Left cardiac atrium (tissue), 4 donors: ENCODE measurements at regions of chr19 and their contacts with region 1.

Region 1: DNA sequence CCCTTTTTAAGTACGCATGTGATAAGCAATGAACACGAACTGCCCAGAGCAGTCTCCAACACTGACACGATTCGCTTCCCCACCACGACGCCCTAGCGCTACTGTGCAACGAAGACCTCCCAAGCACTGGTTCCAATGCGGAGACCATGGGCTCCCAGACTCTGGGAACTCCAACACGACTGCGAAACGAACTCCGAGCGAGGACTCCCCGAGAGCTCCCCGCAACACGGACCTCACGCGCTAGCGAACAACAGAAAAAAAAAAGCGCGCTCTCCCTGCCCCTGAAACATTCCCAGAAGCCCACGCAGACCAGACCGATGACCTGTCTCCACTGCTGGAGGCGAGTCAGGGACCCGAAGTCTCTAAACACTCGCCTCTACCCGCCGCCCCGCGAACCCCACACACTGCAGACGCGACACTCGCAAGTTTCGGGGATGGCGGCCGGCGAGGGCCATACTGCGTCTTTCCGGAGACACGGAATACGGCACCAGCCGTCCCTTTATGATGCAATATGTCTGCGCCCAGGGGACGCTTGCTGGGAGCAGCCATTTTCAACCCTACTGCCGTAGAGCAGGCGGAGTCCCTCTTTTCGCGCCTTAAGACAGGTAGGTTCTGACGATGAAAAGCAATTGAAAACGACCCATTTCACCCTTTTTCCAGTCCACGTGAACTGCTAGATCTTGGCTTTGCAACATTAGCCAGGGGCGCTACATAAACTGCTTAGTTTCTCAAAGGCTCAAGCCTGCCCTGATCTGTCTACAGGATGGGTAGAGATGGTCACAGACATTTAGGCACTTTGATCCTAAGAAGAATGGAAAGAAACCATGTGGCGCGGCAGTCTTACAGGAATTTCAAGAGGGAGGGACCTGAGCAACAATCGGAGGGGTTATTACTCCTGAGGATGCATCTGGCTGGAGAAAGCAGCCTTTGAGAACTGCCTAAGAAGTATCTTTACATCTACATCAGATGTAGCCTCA is at the start of gene ZNF577:
- DNase-seq: peak; percentile 93
- ATAC-seq: peak; percentile 98 to 99
- total RNA-seq, gene ZNF577: 7.3 to 9.3 TPM

Region 2: DNA sequence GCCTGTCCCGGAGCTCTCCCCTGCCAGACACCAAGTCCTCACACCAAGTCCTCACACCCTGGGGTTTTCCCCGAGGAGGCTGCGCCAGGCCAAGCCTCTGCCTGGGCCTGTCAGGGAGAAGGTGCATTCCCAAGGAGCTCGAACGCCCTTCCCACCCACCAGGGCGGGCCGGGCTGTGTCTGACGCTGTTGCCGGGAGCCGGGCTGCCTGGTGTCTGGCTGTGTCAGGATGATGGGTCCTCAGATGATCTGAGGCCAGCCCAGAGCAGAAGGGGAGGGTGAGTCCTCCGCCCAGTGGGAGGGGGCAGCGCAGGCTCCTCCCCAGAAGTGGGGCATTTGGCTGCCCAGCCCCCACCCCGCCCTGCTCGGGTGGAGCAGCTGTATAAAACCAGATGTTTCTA is 161.8 kb before region 1 on chr19:
- intact Hi-C with region 1: no loop called
- DNase-seq: peak; percentile 75
- ATAC-seq: peak; percentile 69 to 82

Region 3: DNA sequence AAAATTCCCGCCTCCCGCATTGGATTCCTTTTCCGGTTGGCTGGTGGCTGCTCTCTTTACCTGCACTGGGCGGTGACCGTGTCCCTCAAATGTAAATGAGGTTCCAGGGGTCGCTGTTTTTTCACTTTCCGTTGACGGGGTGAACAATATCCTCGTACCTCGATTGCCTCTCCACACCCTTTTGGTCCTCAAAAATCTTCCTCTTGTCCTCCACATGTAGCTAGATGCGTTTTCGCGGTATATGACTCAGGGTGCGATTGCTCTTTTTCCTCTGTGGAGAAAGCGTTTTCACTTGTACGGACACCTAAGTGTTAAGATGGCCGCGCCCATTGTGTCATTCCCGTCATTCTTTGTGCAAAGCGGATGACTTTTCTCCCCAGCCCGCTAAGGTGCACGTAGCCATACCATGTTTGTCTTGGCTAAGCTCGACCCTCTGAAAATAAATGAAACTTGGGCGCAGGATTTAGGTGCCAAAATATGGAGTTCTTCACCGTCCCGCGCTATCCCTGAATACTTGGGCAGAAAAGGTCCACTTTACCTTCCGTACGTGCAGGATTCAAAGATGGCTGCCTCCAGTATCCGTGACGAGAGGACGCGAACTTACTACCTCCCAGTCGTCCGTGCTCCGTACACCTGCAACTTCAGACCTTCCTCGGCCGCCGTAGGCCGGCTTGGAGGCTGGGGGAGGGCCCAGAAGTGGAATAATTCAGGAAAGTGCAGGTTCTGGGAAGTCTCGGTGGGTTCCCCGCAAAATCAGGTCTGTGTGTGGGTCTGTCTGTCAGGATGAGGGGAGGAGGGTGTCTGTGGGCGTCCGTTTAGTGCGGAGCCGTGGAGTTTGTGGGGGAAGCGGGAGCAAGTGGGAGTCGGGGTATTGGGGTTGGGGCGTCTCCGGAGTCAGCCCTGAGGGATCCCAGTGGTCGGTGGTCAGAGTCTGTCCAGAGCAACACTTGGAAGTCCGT is 39.3 kb after region 1 on chr19 and contains the start of gene ZNF613:
- intact Hi-C with region 1: loop called in 1 of 2 experiments (anchors 2 kb)
- DNase-seq: peak; percentile 90
- ATAC-seq: peak; percentile 98 to 99
- total RNA-seq, gene ZNF613: 4.3 to 5.5 TPM

Region 4: DNA sequence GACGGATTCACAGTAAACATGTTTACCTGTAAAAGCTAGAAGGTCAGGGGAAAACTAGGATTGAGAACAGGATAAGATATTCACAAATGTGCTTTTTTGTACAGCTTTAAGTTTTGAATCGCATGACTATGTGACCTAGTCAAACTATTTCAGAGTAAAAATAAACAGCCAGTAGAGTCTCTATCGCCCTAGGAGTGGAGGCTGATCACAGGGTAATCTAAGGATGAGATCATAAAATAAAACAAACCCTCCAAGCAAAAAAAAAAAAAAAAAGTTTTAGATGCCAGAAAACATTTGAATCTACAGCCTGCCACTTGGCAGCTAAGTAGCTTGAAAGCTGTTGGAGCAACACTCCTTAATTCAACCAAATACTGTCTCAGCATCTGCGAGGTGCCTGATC is 72.0 kb after region 1 on chr19:
- intact Hi-C with region 1: no loop called
- DNase-seq: no peak
- ATAC-seq: peak in 1 of 2 donors; percentile 34

Region 5: DNA sequence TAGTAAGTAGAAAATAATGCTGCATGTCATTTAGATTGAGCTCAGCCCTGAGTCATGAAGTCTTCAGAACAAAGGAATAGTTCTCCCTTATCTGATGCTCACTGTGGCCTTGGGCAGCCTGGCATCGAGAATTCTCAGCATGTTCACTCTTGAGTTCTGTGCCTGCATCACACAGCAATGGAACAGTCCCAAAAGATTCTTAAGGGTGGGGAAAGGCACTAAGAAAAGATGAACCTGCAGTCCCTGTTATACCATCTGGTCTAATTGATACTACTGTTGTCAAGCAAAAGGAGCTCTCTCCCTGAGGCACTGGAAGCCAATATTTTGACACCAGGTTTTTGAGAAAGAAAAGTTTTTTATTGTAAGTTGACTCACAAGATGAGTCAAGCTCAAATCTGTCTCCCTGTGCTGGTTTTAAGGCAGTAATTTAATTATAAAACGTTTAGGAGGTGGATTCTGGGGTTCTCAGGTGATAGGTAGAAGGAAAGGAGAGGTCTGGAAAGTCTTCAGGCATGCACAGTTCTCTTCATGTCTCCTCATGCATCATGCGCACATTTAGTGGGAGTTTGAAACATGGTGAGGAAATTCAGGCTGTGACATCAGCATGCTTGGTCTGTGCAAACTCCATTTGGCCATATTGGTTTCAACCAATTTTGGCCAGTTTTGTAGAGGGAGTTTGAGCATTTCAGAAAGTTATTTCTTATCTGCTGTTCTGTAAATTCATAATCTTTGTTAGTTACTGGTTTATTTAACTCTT is 343.5 kb after region 1 on chr19:
- intact Hi-C with region 1: no loop called
- DNase-seq: no peak
- ATAC-seq: no peak